ENCODE measurements at regions of chr10 and their contacts with region 1.

Region 1: DNA sequence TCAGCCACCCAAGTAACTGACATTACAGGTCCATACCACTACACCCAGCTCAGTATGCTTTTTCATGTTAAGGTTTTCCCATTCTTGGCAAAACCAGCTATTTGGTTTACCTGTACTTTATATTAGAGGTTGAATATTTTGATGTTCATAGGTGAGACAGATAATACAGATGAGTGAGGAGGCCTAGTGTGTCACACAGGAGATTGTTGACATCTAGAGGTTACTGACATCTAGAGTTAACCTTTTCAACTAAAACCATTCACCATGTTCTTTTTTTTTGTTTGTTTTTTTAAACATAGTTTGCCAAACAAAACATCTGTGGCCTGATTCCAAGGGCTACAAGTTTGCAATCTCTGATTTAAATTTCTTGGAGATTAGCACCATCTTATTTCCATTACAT is 8.0 kb downstream of the GHITM start:
- DNase-seq: no peak
- ATAC-seq: no peak
- H3K4me3 ChIP-seq: no peak overlapping the region
- H3K4me3 Mint-ChIP-seq: no peak overlapping the region
- H3K27ac ChIP-seq: no peak overlapping the region
- H3K27ac Mint-ChIP-seq: no peak overlapping the region
- H3K4me1 ChIP-seq: peaks cover 0 to 3% of the 10 kb centered on the region in 2 experiments
- H3K4me1 Mint-ChIP-seq: peaks cover 0 to 22% (median 18%) of the 10 kb centered on the region in 3 donors
- H3K27me3 ChIP-seq: no peaks in the 10 kb centered on the region
- H3K27me3 Mint-ChIP-seq: no peaks in the 10 kb centered on the region

Region 2: GRCh38 chr10:83991986-83992753 is 155.2 kb before region 1 on chr10:
- CTCF ChIA-PET with region 1: no interaction called
- POLR2A ChIA-PET with region 1: no interaction called
- DNase-seq: peak in 1 of 35 experiments; percentile 9
- ATAC-seq: no peak
- H3K4me3 ChIP-seq: no peak overlapping the region
- H3K4me3 Mint-ChIP-seq: no peak overlapping the region
- H3K27ac ChIP-seq: no peak overlapping the region
- H3K27ac Mint-ChIP-seq: no peak overlapping the region
- H3K4me1 ChIP-seq: peaks cover 0 to 5% of the 10 kb centered on the region in 2 experiments
- H3K4me1 Mint-ChIP-seq: peaks cover 0 to 5% (median 0%) of the 10 kb centered on the region in 3 donors
- H3K27me3 ChIP-seq: peaks cover 0 to 3% of the 10 kb centered on the region in 2 experiments
- H3K27me3 Mint-ChIP-seq: peaks cover 0 to 3% of the 10 kb centered on the region in 2 donors

Region 3: GRCh38 chr10:84118395-84119006 is 28.8 kb before region 1 on chr10:
- CTCF ChIA-PET with region 1: no interaction called
- POLR2A ChIA-PET with region 1: no interaction called
- DNase-seq: no peak
- ATAC-seq: no peak
- H3K4me3 ChIP-seq: no peak overlapping the region
- H3K4me3 Mint-ChIP-seq: no peak overlapping the region
- H3K27ac ChIP-seq: no peak overlapping the region
- H3K27ac Mint-ChIP-seq: no peak overlapping the region
- H3K4me1 ChIP-seq: no peaks in the 10 kb centered on the region
- H3K4me1 Mint-ChIP-seq: no peaks in the 10 kb centered on the region
- H3K27me3 ChIP-seq: no peaks in the 10 kb centered on the region
- H3K27me3 Mint-ChIP-seq: peaks cover 17 to 19% of the 10 kb centered on the region in 2 donors

Region 4: GRCh38 chr10:84205049-84205852 is 57.9 kb after region 1 on chr10:
- CTCF ChIA-PET with region 1: interaction called, 30 to 51 read pairs
- POLR2A ChIA-PET with region 1: no interaction called
- DNase-seq: peak; percentile 22 to 81 (median 63)
- ATAC-seq: peak; percentile 64 to 91 (median 70)
- H3K4me3 ChIP-seq: no peak overlapping the region
- H3K4me3 Mint-ChIP-seq: no peak overlapping the region
- H3K27ac ChIP-seq: no peak overlapping the region
- H3K27ac Mint-ChIP-seq: no peak overlapping the region
- H3K4me1 ChIP-seq: no peaks in the 10 kb centered on the region
- H3K4me1 Mint-ChIP-seq: no peaks in the 10 kb centered on the region
- H3K27me3 ChIP-seq: peaks cover 0 to 24% of the 10 kb centered on the region in 2 experiments
- H3K27me3 Mint-ChIP-seq: peaks cover 6 to 26% of the 10 kb centered on the region in 2 donors

Region 5: DNA sequence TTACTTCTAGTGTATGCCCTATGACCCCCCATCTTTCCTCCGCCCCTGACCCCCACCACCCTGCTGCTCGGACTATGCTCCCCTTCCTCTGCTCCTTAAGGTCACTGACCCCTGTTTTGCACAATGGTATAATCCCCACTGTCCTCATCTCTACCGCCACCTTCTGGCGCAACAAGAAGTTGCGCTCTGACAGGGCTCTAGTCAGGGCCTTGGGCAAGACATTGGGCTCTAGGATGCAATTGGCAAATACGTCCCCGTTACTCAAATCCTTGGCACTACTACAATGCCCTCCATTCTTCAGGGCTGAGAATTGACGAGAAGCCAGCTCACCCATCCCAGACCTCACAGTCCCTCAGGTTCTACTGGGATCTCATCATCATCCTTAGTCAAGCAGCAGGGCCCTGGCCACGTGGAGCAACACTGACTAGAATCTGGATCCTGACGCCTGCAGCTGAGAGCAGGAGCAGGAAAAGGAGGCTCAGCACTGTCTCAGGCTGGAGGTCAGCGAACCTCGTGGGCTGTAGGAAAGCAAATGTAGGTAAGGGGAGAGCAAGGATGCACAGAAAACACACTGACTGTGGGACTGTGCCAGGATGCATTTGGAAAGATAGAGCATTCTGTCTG is 67.4 kb after region 1 on chr10:
- CTCF ChIA-PET with region 1: interaction called, 3 to 10 read pairs
- POLR2A ChIA-PET with region 1: no interaction called
- DNase-seq: peak in 14 of 35 experiments; percentile 12 to 47 (median 21)
- ATAC-seq: peak in 2 of 4 experiments; percentile 40 to 62
- H3K4me3 ChIP-seq: no peak overlapping the region
- H3K4me3 Mint-ChIP-seq: peak overlapping the region in 1 of 3 donors; percentile 47
- H3K27ac ChIP-seq: no peak overlapping the region
- H3K27ac Mint-ChIP-seq: no peak overlapping the region
- H3K4me1 ChIP-seq: no peaks in the 10 kb centered on the region
- H3K4me1 Mint-ChIP-seq: no peaks in the 10 kb centered on the region
- H3K27me3 ChIP-seq: peaks cover 0 to 12% of the 10 kb centered on the region in 2 experiments
- H3K27me3 Mint-ChIP-seq: peaks cover 2 to 4% of the 10 kb centered on the region in 2 donors